ENCODE measurements at regions of chr5 and their contacts with region 1.

Region 1: DNA sequence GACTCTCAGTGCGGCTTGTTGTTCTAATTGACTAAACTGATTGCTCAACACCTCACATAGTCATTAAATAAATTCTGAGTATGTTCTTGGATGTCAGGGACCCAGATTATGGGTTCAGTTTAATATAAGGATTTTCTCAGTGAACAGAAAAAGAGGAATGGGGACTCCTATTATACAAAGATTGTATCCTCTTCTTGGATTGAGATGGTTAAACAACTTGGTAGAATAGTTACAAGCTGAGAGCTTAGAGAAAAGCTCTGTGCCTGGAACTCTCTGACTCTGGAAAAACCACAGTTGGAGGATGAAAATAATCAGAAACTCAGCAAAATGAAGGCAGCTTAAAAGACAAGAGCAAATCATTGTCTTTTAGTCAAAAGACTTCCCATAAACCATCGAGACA is 30.5 kb downstream of the ANKRA2 start:
- DNase-seq: no peak
- H3K4me3 ChIP-seq: no peak overlapping the region
- H3K4me3 Mint-ChIP-seq: no peak overlapping the region
- H3K27ac ChIP-seq: no peak overlapping the region
- H3K27ac Mint-ChIP-seq: no peak overlapping the region
- H3K4me1 ChIP-seq: no peaks in the 10 kb centered on the region
- H3K4me1 Mint-ChIP-seq: no peaks in the 10 kb centered on the region
- H3K27me3 ChIP-seq: no peaks in the 10 kb centered on the region
- H3K27me3 Mint-ChIP-seq: peaks cover 15 to 47% of the 10 kb centered on the region in 2 donors

Region 2: GRCh38 chr5:73519531-73520283 is 15.3 kb before region 1 on chr5:
- CTCF ChIA-PET with region 1: interaction called, 72 read pairs
- POLR2A ChIA-PET with region 1: interaction called, 3 read pairs
- DNase-seq: peak; percentile 28 to 78 (median 68)
- H3K4me3 ChIP-seq: no peak overlapping the region
- H3K4me3 Mint-ChIP-seq: peak overlapping the region; percentile 24 to 78 (median 43)
- H3K27ac ChIP-seq: no peak overlapping the region
- H3K27ac Mint-ChIP-seq: peak overlapping the region in 2 of 8 donors; percentile 23 to 65
- H3K4me1 ChIP-seq: no peaks in the 10 kb centered on the region
- H3K4me1 Mint-ChIP-seq: peaks cover 7 to 9% (median 8%) of the 10 kb centered on the region in 3 donors
- H3K27me3 ChIP-seq: no peaks in the 10 kb centered on the region
- H3K27me3 Mint-ChIP-seq: no peaks in the 10 kb centered on the region

Region 3: GRCh38 chr5:73663860-73664240 is 128.9 kb after region 1 on chr5:
- CTCF ChIA-PET with region 1: no interaction called
- POLR2A ChIA-PET with region 1: no interaction called
- DNase-seq: no peak
- H3K4me3 ChIP-seq: no peak overlapping the region
- H3K4me3 Mint-ChIP-seq: no peak overlapping the region
- H3K27ac ChIP-seq: no peak overlapping the region
- H3K27ac Mint-ChIP-seq: no peak overlapping the region
- H3K4me1 ChIP-seq: no peaks in the 10 kb centered on the region
- H3K4me1 Mint-ChIP-seq: peaks cover 0 to 5% (median 2%) of the 10 kb centered on the region in 3 donors
- H3K27me3 ChIP-seq: no peaks in the 10 kb centered on the region
- H3K27me3 Mint-ChIP-seq: peaks cover 6 to 16% of the 10 kb centered on the region in 2 donors

Region 4: DNA sequence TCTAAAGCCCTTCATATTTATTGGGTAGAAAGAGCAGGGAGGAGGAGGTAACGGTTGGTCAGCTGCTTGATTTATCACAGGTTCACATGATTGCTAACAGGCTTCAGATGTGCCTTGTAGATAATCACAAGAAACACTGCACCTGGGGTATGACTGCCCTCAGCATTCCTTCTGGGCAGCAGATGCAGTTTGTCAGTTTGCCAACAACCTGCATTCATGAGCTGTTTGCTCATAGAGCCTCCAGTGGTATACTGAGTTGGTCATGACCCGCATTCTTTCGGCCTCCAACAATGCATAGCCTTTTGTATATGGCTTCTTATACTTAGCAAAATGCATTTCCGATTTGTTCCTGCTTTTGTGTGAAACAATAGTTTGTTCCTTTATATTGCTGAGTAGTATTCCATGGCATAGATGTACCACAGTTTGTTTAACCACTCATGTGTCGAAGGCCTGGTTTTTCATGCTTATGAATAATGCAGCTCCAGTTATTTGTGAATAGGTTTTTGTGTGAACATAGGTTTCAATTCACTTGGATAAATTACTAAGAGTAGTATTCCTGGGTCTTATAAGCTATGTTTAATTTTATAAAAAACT is 174.7 kb after region 1 on chr5:
- CTCF ChIA-PET with region 1: no interaction called
- POLR2A ChIA-PET with region 1: no interaction called
- DNase-seq: no peak
- H3K4me3 ChIP-seq: no peak overlapping the region
- H3K4me3 Mint-ChIP-seq: no peak overlapping the region
- H3K27ac ChIP-seq: no peak overlapping the region
- H3K27ac Mint-ChIP-seq: no peak overlapping the region
- H3K4me1 ChIP-seq: no peaks in the 10 kb centered on the region
- H3K4me1 Mint-ChIP-seq: no peaks in the 10 kb centered on the region
- H3K27me3 ChIP-seq: no peaks in the 10 kb centered on the region
- H3K27me3 Mint-ChIP-seq: peaks cover 0 to 4% of the 10 kb centered on the region in 2 donors

Measured in CD8-positive, alpha-beta memory T cell (primary cell).